GM12878 (cell line): ENCODE measurements at regions of chr17 and their contacts with region 1.

Region 1: GRCh38 chr17:73311781-73312641 is at the start of gene CDC42EP4:
- DNase-seq: no peak
- ATAC-seq: peak; percentile 92
- H3K4me3 ChIP-seq: peak within 1 kb of the TSS; percentile 93
- H3K27ac ChIP-seq: peak within 1 kb of the TSS; percentile 69
- H3K4me1 ChIP-seq: peaks cover 4% of the 10 kb centered on the region
- H3K27me3 ChIP-seq: no peaks in the 10 kb centered on the region
- CTCF ChIP-seq: no peak
- EP300 ChIP-seq: no peak
- POLR2A ChIP-seq: peak; percentile 62
- RAD21 ChIP-seq: no peak
- polyA plus RNA-seq, gene CDC42EP4: 0.05 to 0.20 TPM

Region 2: DNA sequence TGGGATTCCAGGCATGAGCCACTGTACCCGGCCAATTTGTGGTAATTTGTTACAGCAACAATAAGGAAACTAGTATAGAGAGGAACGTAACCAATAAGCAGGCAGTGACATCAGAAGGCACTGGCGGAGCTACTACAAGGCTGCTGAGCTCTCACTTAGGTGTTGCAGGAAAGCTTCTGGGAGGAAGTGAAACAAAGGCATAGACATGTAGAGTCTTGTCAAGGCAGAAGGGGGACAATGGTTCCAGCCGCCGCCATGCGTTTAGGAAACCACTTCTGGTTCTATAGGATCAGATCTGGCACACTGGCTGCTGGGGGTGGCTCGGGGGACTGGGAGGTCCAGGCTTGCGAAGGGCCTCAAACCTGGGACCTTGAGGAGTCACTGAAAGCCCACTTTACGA is 40.9 kb before region 1 on chr17:
- CTCF ChIA-PET with region 1: interaction called, 8 read pairs
- POLR2A ChIA-PET with region 1: interaction called, 6 read pairs
- RAD21 ChIA-PET with region 1: interaction called, 11 read pairs
- SMC1A ChIA-PET with region 1: interaction called, 18 read pairs
- in situ Hi-C with region 1: loop called (anchors 5 kb)
- intact Hi-C with region 1: loop called (anchors 1 kb)
- DNase-seq: peak; percentile 88
- ATAC-seq: peak; percentile 99
- H3K4me3 ChIP-seq: no peak overlapping the region
- H3K27ac ChIP-seq: peak overlapping the region; percentile 82
- H3K4me1 ChIP-seq: peaks cover 14% of the 10 kb centered on the region
- H3K27me3 ChIP-seq: no peaks in the 10 kb centered on the region
- CTCF ChIP-seq: no peak
- EP300 ChIP-seq: peak; percentile 74 to 88; a peak in 3 of 4 replicates
- POLR2A ChIP-seq: 0 out of 2 replicates have a peak, but pooled peaks have one; percentile 38
- RAD21 ChIP-seq: no peak

Region 3: DNA sequence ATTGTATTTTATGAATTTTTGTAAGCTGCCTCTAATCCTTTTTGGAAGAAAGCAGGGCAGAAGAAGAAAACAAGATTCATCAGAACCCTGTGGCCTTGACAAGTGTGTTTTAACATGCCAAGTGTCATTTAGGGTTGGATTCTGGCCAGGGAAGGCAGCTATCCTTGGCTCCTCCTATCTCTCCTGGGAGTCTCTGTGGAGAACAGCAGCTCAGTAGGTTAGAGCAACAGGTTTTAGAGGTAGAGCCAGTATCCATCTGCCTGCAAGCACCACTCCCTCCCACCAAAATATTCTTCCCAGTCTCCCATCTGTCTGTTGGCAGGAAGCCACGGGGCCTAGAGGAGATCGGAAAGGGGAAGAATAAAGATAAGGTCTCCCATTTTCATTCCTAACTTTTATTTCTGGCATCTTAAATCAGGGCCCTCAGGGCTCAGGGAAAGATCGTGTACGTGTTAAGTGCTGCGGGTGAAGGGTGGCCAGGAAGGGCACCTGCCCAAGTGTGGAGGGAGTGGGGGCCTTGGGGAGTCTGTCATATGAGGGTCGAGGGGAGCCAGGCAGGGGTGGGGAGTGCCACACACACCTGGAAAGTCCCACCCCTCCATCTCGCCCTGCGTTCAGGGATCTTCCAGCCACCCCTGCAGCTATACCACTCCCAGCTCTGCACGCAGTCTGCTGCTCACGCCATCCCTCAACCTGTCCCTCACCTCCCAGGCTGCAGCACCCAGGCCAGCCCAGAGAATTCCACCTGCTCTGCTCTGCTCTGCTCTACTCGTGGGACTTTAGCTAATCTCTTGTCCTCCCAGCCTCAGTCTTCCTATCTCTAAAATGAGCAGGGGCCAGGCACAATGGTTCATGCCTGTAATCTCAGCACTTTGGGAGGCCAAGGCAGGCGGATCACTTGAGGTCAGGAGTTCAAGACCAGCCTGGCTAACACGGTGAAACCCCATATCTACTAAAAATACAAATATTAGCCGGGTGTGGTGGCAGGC is 33.3 kb before region 1 on chr17:
- CTCF ChIA-PET with region 1: interaction called, 9 read pairs
- POLR2A ChIA-PET with region 1: interaction called, 20 read pairs
- RAD21 ChIA-PET with region 1: interaction called, 27 read pairs
- SMC1A ChIA-PET with region 1: interaction called, 29 read pairs
- in situ Hi-C with region 1: loop called (anchors 5 kb)
- intact Hi-C with region 1: loop called (anchors 1 kb)
- DNase-seq: no peak
- ATAC-seq: no peak
- H3K4me3 ChIP-seq: no peak overlapping the region
- H3K27ac ChIP-seq: no peak overlapping the region
- H3K4me1 ChIP-seq: peaks cover 14% of the 10 kb centered on the region
- H3K27me3 ChIP-seq: no peaks in the 10 kb centered on the region
- CTCF ChIP-seq: no peak
- EP300 ChIP-seq: no peak
- POLR2A ChIP-seq: no peak
- RAD21 ChIP-seq: no peak

Region 4: DNA sequence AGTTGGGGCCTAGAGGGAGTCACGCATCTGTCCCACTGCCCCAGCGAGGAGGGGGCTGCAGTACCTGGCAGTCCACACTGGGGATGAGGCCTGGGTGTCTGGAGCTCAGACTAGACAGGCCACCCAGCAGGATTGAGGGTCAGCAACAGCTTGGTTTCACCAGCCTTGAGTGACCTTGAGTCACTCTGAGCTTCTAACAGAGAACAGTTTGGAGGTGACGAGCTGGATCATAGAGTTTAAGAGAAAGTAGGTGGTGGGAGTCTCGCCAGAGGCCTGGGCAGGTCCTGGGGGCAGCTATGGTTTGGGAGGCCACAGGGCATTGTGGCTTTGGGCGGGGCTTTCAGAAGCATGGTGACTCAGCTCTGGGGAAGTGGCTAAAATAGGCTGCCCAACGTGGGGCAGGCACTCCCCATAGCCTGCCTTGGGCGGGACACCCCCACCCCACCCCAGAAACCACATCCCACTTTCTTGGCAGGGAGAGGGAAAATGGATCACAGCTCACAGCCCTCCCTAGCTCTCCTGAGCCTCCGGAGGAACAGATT is 20.7 kb before region 1 on chr17:
- CTCF ChIA-PET with region 1: interaction called, 28 read pairs
- POLR2A ChIA-PET with region 1: interaction called, 28 read pairs
- RAD21 ChIA-PET with region 1: interaction called, 16 read pairs
- SMC1A ChIA-PET with region 1: interaction called, 10 read pairs
- in situ Hi-C with region 1: no loop called
- intact Hi-C with region 1: loop called (anchors 2 kb)
- DNase-seq: peak; percentile 70
- ATAC-seq: peak; percentile 95
- H3K4me3 ChIP-seq: peak overlapping the region; percentile 59; the same call in 1 of the 2 replicates
- H3K27ac ChIP-seq: peak overlapping the region; percentile 87
- H3K4me1 ChIP-seq: peaks cover 27% of the 10 kb centered on the region
- H3K27me3 ChIP-seq: no peaks in the 10 kb centered on the region
- CTCF ChIP-seq: no peak
- EP300 ChIP-seq: peak in 1 of 2 experiments; percentile 45; a peak in 2 of 4 replicates
- POLR2A ChIP-seq: no peak
- RAD21 ChIP-seq: no peak

Region 5: GRCh38 chr17:73297934-73298861 is 13.8 kb before region 1 on chr17:
- CTCF ChIA-PET with region 1: interaction called, 16 read pairs
- POLR2A ChIA-PET with region 1: interaction called, 18 read pairs
- RAD21 ChIA-PET with region 1: interaction called, 32 read pairs
- SMC1A ChIA-PET with region 1: interaction called, 22 read pairs
- in situ Hi-C with region 1: no loop called
- intact Hi-C with region 1: no loop called
- DNase-seq: no peak
- ATAC-seq: peak; percentile 91
- H3K4me3 ChIP-seq: peak overlapping the region; percentile 14; the same call in 1 of the 2 replicates
- H3K27ac ChIP-seq: peak overlapping the region; percentile 37
- H3K4me1 ChIP-seq: peaks cover 9% of the 10 kb centered on the region
- H3K27me3 ChIP-seq: no peaks in the 10 kb centered on the region
- CTCF ChIP-seq: no peak
- EP300 ChIP-seq: no peak
- POLR2A ChIP-seq: no peak
- RAD21 ChIP-seq: no peak

Region 6: GRCh38 chr17:73342050-73342522 is 30.1 kb after region 1 on chr17:
- CTCF ChIA-PET with region 1: interaction called, 25 read pairs
- POLR2A ChIA-PET with region 1: interaction called, 7 read pairs
- RAD21 ChIA-PET with region 1: interaction called, 9 read pairs
- SMC1A ChIA-PET with region 1: interaction called, 13 read pairs
- in situ Hi-C with region 1: no loop called
- intact Hi-C with region 1: loop called (anchors 2 kb)
- DNase-seq: peak; percentile 20
- ATAC-seq: peak; percentile 84
- H3K4me3 ChIP-seq: no peak overlapping the region
- H3K27ac ChIP-seq: no peak overlapping the region
- H3K4me1 ChIP-seq: no peaks in the 10 kb centered on the region
- H3K27me3 ChIP-seq: no peaks in the 10 kb centered on the region
- CTCF ChIP-seq: no peak
- EP300 ChIP-seq: no peak
- POLR2A ChIP-seq: no peak
- RAD21 ChIP-seq: no peak

Region 7: GRCh38 chr17:73365906-73366623 is 54.1 kb after region 1 on chr17:
- CTCF ChIA-PET with region 1: interaction called, 15 read pairs
- POLR2A ChIA-PET with region 1: interaction called, 7 read pairs
- RAD21 ChIA-PET with region 1: interaction called, 24 read pairs
- SMC1A ChIA-PET with region 1: interaction called, 5 read pairs
- in situ Hi-C with region 1: no loop called
- intact Hi-C with region 1: loop called (anchors 5 kb)
- DNase-seq: no peak
- ATAC-seq: peak; percentile 52
- H3K4me3 ChIP-seq: no peak overlapping the region
- H3K27ac ChIP-seq: no peak overlapping the region
- H3K4me1 ChIP-seq: no peaks in the 10 kb centered on the region
- H3K27me3 ChIP-seq: peaks cover 0 to 2% of the 10 kb centered on the region in 2 experiments; a peak in 2 of 4 replicates
- CTCF ChIP-seq: no peak; a peak in 1 of 6 replicates
- EP300 ChIP-seq: no peak
- POLR2A ChIP-seq: no peak
- RAD21 ChIP-seq: no peak

Region 8: GRCh38 chr17:73455050-73455687 is 143.2 kb after region 1 on chr17:
- CTCF ChIA-PET with region 1: no interaction called
- POLR2A ChIA-PET with region 1: no interaction called
- RAD21 ChIA-PET with region 1: no interaction called
- SMC1A ChIA-PET with region 1: no interaction called
- in situ Hi-C with region 1: no loop called
- intact Hi-C with region 1: no loop called
- DNase-seq: no peak
- ATAC-seq: no peak
- H3K4me3 ChIP-seq: no peak overlapping the region
- H3K27ac ChIP-seq: no peak overlapping the region
- H3K4me1 ChIP-seq: no peaks in the 10 kb centered on the region
- H3K27me3 ChIP-seq: peaks cover 1 to 2% of the 10 kb centered on the region in 2 experiments; a peak in 2 of 4 replicates
- CTCF ChIP-seq: no peak
- EP300 ChIP-seq: no peak
- POLR2A ChIP-seq: no peak
- RAD21 ChIP-seq: no peak